GM12878 (cell line): ENCODE measurements at regions of chr7 and their contacts with region 1.

Region 1: DNA sequence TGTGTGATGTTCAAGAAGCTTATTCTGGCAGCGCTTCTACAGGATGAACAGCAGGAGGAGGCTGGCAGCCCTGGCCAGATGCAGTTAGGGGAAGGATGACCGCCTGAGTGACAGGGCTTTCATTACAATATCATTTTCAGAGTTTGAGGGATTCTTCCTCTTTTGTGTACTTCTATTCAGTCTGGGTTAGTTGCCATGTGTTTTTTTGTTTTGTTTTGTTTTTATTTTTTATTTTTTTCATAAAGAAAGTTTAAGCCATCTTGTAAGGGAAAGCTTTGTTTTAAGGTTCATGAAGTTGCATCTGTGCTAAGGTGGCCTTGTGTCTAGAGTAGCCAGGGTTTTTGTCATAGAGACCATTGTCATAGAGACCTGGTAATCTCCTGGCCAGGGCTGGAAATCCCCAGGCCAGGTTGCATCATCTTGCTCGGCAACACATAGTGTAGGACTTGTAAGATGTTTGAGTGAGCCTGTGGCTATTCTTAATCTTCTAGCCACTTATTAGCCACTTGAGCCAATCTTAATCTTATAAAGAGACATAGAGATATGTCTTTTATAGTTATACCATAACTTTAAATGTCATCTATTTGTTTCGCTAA is 230.5 kb upstream of the TMEM229A start:
- DNase-seq: peak; percentile 31
- ATAC-seq: peak; percentile 98
- H3K4me3 ChIP-seq: no peak overlapping the region
- H3K27ac ChIP-seq: no peak overlapping the region
- H3K4me1 ChIP-seq: no peaks in the 10 kb centered on the region
- H3K27me3 ChIP-seq: no peaks in the 10 kb centered on the region
- CTCF ChIP-seq: no peak
- EP300 ChIP-seq: peak; percentile 26 to 63; a peak in 2 of 4 replicates
- POLR2A ChIP-seq: no peak
- RAD21 ChIP-seq: no peak

Region 2: DNA sequence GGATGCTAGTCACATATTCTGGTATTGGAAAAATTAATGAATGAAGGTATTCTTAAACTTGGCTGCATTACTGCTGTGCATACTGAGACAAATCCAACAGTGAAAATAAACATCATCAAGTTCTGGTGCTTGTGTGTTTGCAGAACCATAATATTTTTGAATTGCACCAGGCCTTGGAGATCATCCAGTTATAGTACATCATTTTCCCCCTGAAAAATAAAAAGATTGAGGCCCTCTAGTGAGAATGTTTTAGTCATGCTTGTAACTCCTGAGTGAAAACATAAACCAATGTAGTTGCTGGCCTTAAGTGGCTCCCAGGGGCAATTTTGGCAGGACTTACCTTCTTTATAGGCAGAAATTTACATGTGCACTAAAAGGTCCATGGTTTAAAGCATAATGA is 11.7 kb before region 1 on chr7:
- CTCF ChIA-PET with region 1: interaction called, 4 read pairs
- POLR2A ChIA-PET with region 1: interaction called, 4 read pairs
- RAD21 ChIA-PET with region 1: interaction called, 16 read pairs
- SMC1A ChIA-PET with region 1: interaction called, 44 read pairs
- in situ Hi-C with region 1: no loop called
- intact Hi-C with region 1: no loop called
- DNase-seq: no peak
- ATAC-seq: no peak
- H3K4me3 ChIP-seq: no peak overlapping the region
- H3K27ac ChIP-seq: no peak overlapping the region
- H3K4me1 ChIP-seq: no peaks in the 10 kb centered on the region
- H3K27me3 ChIP-seq: no peaks in the 10 kb centered on the region
- CTCF ChIP-seq: no peak
- EP300 ChIP-seq: no peak
- POLR2A ChIP-seq: no peak
- RAD21 ChIP-seq: no peak